ENCODE measurements at regions of chr13 and their contacts with region 1.

Region 1: GRCh38 chr13:100235311-100235901 is 146.5 kb downstream of the PCCA start:
- DNase-seq: peak in 2 of 5 donors; percentile 57 to 70
- H3K4me3 ChIP-seq: peak overlapping the region in 1 of 3 donors; percentile 30
- H3K27ac ChIP-seq: no peak overlapping the region
- H3K4me1 ChIP-seq: peaks cover 0 to 29% (median 3%) of the 10 kb centered on the region in 3 donors
- H3K27me3 ChIP-seq: no peaks in the 10 kb centered on the region
- CTCF ChIP-seq: peak; percentile 34

Region 2: DNA sequence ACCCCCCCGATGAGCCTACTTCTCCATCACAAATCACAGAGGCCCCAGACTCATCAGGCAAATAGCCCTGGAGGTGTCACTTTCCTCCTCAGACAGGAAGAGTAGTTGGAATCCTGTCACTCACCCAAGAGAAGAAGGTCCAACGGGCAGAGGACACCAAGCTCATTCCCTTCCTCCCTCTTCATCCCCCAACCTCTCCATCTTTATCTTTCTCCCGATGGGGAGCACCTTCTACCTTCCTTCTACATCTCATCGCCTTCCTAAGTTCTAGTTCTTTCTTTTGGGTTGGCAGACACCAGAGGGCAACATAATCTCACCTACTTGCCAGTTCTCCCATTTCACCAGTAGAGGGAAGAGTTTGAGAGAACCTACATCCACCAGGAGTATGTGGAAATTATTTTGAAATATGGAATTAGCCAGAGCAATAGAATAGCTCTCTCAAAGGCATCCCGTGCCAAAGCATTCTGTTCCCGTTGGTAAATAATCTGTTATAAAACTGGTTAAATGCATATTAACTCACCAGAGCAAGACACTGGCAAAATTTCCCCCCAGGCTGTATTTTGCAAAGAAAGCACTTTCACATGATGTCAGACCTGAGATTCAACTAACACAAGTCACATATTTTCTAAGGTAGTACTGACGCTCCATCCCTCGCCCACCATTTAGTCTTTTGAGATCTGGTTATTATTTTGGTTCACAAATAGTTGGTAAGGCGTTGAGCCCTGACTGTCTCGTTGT is 318.9 kb before region 1 on chr13:
- intact Hi-C with region 1: loop called (anchors 10 kb)
- DNase-seq: peak in 2 of 5 donors; percentile 76 to 78
- H3K4me3 ChIP-seq: no peak overlapping the region
- H3K27ac ChIP-seq: no peak overlapping the region
- H3K4me1 ChIP-seq: no peaks in the 10 kb centered on the region
- H3K27me3 ChIP-seq: no peaks in the 10 kb centered on the region
- CTCF ChIP-seq: peak; percentile 85

Region 3: GRCh38 chr13:100842136-100842535 is 606.7 kb after region 1 on chr13:
- intact Hi-C with region 1: no loop called
- DNase-seq: no peak
- H3K4me3 ChIP-seq: no peak overlapping the region
- H3K27ac ChIP-seq: no peak overlapping the region
- H3K4me1 ChIP-seq: no peaks in the 10 kb centered on the region
- H3K27me3 ChIP-seq: no peaks in the 10 kb centered on the region
- CTCF ChIP-seq: no peak